H1 (cell line): ENCODE measurements at regions of chr13 and their contacts with region 1.

Region 1: GRCh38 chr13:95834134-95834765 is 157.3 kb downstream of the DNAJC3 start:
- DNase-seq: peak; percentile 25 to 81
- H3K4me3 ChIP-seq: no peak overlapping the region
- H3K27ac ChIP-seq: no peak overlapping the region
- H3K4me1 ChIP-seq: no peaks in the 10 kb centered on the region
- H3K27me3 ChIP-seq: no peaks in the 10 kb centered on the region
- CTCF ChIP-seq: peak; percentile 82 to 87 (median 87)
- EP300 ChIP-seq: no peak
- POLR2A ChIP-seq: no peak
- RAD21 ChIP-seq: peak; percentile 98 to 99

Region 2: GRCh38 chr13:95624020-95624419 is 210.2 kb before region 1 on chr13:
- CTCF ChIA-PET with region 1: interaction called, 142 read pairs
- POLR2A ChIA-PET with region 1: no interaction called
- DNase-seq: peak in 1 of 2 experiments; percentile 48
- H3K4me3 ChIP-seq: no peak overlapping the region
- H3K27ac ChIP-seq: no peak overlapping the region
- H3K4me1 ChIP-seq: no peaks in the 10 kb centered on the region; a peak in 1 of 7 replicates
- H3K27me3 ChIP-seq: no peaks in the 10 kb centered on the region
- CTCF ChIP-seq: peak in 2 of 3 experiments; percentile 58 to 80; a peak in 3 of 4 replicates
- EP300 ChIP-seq: no peak
- POLR2A ChIP-seq: no peak
- RAD21 ChIP-seq: peak; percentile 90 to 93

Region 3: GRCh38 chr13:95704510-95704909 is 129.7 kb before region 1 on chr13:
- CTCF ChIA-PET with region 1: interaction called, 13 read pairs
- POLR2A ChIA-PET with region 1: no interaction called
- DNase-seq: no peak
- H3K4me3 ChIP-seq: no peak overlapping the region
- H3K27ac ChIP-seq: no peak overlapping the region
- H3K4me1 ChIP-seq: no peaks in the 10 kb centered on the region
- H3K27me3 ChIP-seq: no peaks in the 10 kb centered on the region
- CTCF ChIP-seq: peak; percentile 14 to 51 (median 25); a peak in 3 of 4 replicates
- EP300 ChIP-seq: no peak
- POLR2A ChIP-seq: no peak
- RAD21 ChIP-seq: peak; percentile 19 to 48; a peak in 3 of 4 replicates

Region 4: DNA sequence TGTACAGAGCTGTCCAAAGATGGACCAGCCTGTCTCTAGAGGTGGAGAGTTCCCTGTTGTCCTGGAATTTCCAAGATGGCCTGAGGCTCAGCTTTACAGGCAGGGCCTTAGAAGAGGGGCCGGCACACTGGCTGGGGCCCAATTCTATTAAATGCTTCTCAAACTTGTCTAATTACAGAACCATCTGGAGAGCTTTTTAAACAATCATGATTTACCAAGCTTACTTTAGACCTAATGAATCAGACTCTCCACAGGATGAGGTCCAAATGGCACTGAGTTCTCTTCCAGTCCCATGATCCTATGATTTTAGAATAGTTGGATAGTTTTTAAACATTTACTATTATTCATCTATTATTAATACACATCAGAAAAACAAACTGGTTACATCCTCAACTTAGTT is 33.8 kb before region 1 on chr13:
- CTCF ChIA-PET with region 1: interaction called, 13 read pairs
- POLR2A ChIA-PET with region 1: no interaction called
- DNase-seq: no peak
- H3K4me3 ChIP-seq: no peak overlapping the region
- H3K27ac ChIP-seq: no peak overlapping the region
- H3K4me1 ChIP-seq: no peaks in the 10 kb centered on the region
- H3K27me3 ChIP-seq: no peaks in the 10 kb centered on the region
- CTCF ChIP-seq: no peak
- EP300 ChIP-seq: no peak
- POLR2A ChIP-seq: no peak
- RAD21 ChIP-seq: no peak

Region 5: DNA sequence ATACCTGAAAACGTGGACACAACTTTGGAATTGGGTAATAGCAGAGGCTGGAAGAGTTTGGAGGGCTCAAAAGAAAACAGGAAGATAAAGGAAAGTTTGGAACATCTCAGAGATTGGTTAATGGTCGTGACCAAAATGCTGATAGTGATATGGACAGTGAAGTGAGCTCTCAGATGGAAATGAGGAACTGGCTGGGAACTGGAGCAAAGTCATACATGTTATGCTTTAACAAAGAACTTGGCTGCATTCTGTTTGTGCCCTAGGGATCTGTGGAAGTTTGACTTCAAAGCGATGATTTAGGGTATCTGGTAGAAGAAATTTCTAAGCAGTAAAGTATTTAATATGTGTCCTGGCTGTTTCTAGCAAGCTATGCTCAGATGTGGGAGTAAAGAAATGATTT is 21.1 kb before region 1 on chr13:
- CTCF ChIA-PET with region 1: interaction called, 13 read pairs
- POLR2A ChIA-PET with region 1: no interaction called
- DNase-seq: no peak
- H3K4me3 ChIP-seq: no peak overlapping the region
- H3K27ac ChIP-seq: no peak overlapping the region
- H3K4me1 ChIP-seq: no peaks in the 10 kb centered on the region
- H3K27me3 ChIP-seq: no peaks in the 10 kb centered on the region
- CTCF ChIP-seq: no peak
- EP300 ChIP-seq: no peak
- POLR2A ChIP-seq: no peak
- RAD21 ChIP-seq: no peak

Region 6: GRCh38 chr13:95822303-95822702 is 11.9 kb before region 1 on chr13:
- CTCF ChIA-PET with region 1: interaction called, 28 read pairs
- POLR2A ChIA-PET with region 1: interaction called, 3 read pairs
- DNase-seq: no peak
- H3K4me3 ChIP-seq: no peak overlapping the region
- H3K27ac ChIP-seq: no peak overlapping the region
- H3K4me1 ChIP-seq: no peaks in the 10 kb centered on the region
- H3K27me3 ChIP-seq: no peaks in the 10 kb centered on the region
- CTCF ChIP-seq: no peak
- EP300 ChIP-seq: no peak
- POLR2A ChIP-seq: no peak
- RAD21 ChIP-seq: no peak

Region 7: DNA sequence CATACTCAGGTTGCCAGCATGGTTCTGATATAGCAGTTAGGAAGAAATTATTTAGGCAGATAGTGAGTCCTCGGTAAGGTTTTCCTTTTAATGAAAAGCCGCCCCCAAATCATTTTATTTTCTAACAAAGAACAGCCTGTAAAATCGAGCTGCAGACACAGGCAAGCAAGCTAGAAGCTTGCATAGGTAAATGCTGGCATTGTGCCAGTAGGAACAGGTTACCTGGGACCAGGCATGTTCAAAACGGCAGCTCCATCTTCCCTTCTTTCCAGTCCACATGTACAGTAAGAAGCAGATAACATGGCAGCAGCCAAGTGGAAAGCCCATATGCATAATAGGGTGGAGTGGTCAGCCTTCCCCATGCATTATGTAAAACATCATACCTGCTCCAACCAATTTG is 147.9 kb after region 1 on chr13:
- CTCF ChIA-PET with region 1: interaction called, 13 read pairs
- POLR2A ChIA-PET with region 1: no interaction called
- DNase-seq: no peak
- H3K4me3 ChIP-seq: no peak overlapping the region
- H3K27ac ChIP-seq: no peak overlapping the region
- H3K4me1 ChIP-seq: no peaks in the 10 kb centered on the region
- H3K27me3 ChIP-seq: no peaks in the 10 kb centered on the region
- CTCF ChIP-seq: no peak
- EP300 ChIP-seq: no peak
- POLR2A ChIP-seq: no peak
- RAD21 ChIP-seq: no peak

Region 8: GRCh38 chr13:96020155-96020575 is 185.9 kb after region 1 on chr13:
- CTCF ChIA-PET with region 1: no interaction called
- POLR2A ChIA-PET with region 1: no interaction called
- DNase-seq: no peak
- H3K4me3 ChIP-seq: no peak overlapping the region
- H3K27ac ChIP-seq: no peak overlapping the region
- H3K4me1 ChIP-seq: peaks cover 0 to 2% (median under 1%) of the 10 kb centered on the region in 4 experiments; a peak in 3 of 7 replicates
- H3K27me3 ChIP-seq: no peaks in the 10 kb centered on the region
- CTCF ChIP-seq: peak in 2 of 3 experiments; percentile 47 to 61; a peak in 3 of 4 replicates
- EP300 ChIP-seq: no peak
- POLR2A ChIP-seq: no peak
- RAD21 ChIP-seq: peak; percentile 82 to 83

Region 9: GRCh38 chr13:96119921-96120320 is 285.7 kb after region 1 on chr13:
- CTCF ChIA-PET with region 1: no interaction called
- POLR2A ChIA-PET with region 1: no interaction called
- DNase-seq: no peak
- H3K4me3 ChIP-seq: no peak overlapping the region
- H3K27ac ChIP-seq: no peak overlapping the region
- H3K4me1 ChIP-seq: no peaks in the 10 kb centered on the region
- H3K27me3 ChIP-seq: no peaks in the 10 kb centered on the region
- CTCF ChIP-seq: no peak
- EP300 ChIP-seq: no peak
- POLR2A ChIP-seq: no peak
- RAD21 ChIP-seq: no peak